Activated CD4-positive, alpha-beta T cell treated with anti-CD3 and anti-CD28 coated beads, Interleukin-2, amount 10 ng/mL, durations not matched to agents 24 days and 14 days (primary cell): ENCODE measurements at regions of chr5 and their contacts with region 1.

Region 1: DNA sequence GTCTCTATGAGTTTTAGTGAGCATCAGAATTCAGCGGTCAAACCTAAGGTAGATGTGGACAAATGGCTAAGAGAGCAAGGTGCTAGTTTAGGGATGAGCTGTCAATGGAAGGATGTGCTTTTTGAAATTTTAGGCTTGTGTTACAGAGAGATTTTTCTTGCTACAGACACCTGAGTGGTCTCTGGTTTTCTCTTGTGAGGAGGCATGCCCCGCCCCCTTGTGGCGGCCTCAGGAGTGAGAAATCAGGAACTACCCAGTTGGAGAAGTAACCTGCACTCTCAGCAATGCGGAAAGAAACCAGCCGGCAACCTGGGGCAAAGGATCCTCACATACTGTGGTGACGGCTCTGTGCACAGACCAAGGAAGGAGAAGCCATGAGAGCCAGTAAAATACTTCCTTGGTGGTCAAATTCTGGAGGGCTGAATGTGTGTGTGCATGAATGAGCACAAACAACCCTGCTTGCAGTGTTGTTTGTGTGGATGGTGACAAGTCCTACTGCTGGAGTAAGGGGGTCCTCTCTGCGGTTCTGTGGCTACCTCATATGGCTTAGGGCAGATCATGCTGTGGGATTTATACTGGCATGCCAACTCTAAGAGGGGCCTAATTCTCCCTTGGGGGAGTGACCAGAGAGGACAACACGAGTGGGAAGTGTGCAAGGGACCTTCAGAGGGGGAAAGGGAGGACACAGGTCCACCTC is 16.7 kb upstream of the HSD17B4 start:
- DNase-seq: peak; percentile 89
- H3K4me3 Mint-ChIP-seq: no peak overlapping the region
- H3K27ac Mint-ChIP-seq: no peak overlapping the region
- H3K4me1 Mint-ChIP-seq: peaks cover 13% of the 10 kb centered on the region
- H3K27me3 Mint-ChIP-seq: peaks cover 23% of the 10 kb centered on the region

Region 2: GRCh38 chr5:119452373-119453039 is 16.9 kb after region 1 on chr5 and contains the start of gene HSD17B4:
- intact Hi-C with region 1: loop called (anchors 2 kb)
- DNase-seq: peak; percentile 93
- H3K4me3 Mint-ChIP-seq: peak within 1 kb of the TSS; percentile 95
- H3K27ac Mint-ChIP-seq: peak within 1 kb of the TSS; percentile 85
- H3K4me1 Mint-ChIP-seq: peaks cover 15% of the 10 kb centered on the region
- H3K27me3 Mint-ChIP-seq: peaks cover 13% of the 10 kb centered on the region
- total RNA-seq, gene HSD17B4: 52.5 and 70.4 TPM in 2 replicates

Region 3: DNA sequence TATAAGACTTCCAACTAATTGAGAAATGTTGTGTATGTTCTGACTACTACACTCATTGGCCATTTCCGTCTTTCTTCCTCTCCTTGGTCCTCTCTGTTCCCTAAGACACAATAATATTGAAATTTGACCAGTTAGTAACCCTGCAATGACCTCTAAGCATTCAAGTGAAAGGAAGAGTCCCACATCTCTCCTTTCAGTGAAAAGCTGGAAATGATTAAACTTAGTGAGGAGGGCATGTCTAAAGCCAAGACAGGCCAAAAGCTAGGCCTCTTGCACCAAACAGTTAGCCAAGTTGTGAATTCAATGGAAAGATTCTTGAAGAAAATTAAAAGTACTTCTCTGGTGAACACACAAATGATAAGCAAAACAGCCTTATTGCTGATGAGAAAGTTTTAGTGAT is 1151.1 kb after region 1 on chr5:
- intact Hi-C with region 1: no loop called
- DNase-seq: no peak
- H3K4me3 Mint-ChIP-seq: no peak overlapping the region
- H3K27ac Mint-ChIP-seq: no peak overlapping the region
- H3K4me1 Mint-ChIP-seq: no peaks in the 10 kb centered on the region
- H3K27me3 Mint-ChIP-seq: no peaks in the 10 kb centered on the region